Panc1 (cell line): ENCODE measurements at regions of chr10 and their contacts with region 1.

Region 1: GRCh38 chr10:125029606-125030242 is 87.8 kb downstream of the ZRANB1 start:
- DNase-seq: no peak
- ATAC-seq: peak; percentile 5; the same call in 1 of the 2 replicates
- H3K4me3 ChIP-seq: no peak overlapping the region
- H3K27ac ChIP-seq: no peak overlapping the region
- H3K4me1 ChIP-seq: peaks cover 8% of the 10 kb centered on the region
- H3K27me3 ChIP-seq: no peaks in the 10 kb centered on the region
- CTCF ChIP-seq: no peak

Region 2: DNA sequence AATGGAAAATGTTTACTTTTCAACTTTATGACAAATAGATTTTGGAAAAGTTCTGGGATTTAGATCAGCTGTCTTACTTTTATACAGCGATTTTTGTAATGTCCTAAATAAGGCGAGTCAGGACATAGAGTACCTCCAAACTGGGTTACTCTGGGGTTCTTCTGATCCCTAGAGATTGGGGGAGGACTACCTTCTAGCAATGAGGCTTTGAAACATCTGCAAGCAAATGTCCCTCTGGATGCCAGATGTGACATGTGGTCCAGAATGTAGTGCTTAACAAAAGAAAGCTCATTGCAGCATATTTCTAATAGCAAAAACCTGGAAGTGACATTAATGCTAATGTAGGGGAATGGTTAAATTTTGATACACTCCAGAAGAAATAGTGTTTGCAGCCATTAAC is 192.0 kb before region 1 on chr10:
- CTCF ChIA-PET with region 1: no interaction called
- POLR2A ChIA-PET with region 1: interaction called, 11 read pairs
- in situ Hi-C with region 1: no loop called
- intact Hi-C with region 1: no loop called
- DNase-seq: no peak
- ATAC-seq: no peak
- H3K4me3 ChIP-seq: no peak overlapping the region
- H3K27ac ChIP-seq: no peak overlapping the region
- H3K4me1 ChIP-seq: no peaks in the 10 kb centered on the region
- H3K27me3 ChIP-seq: no peaks in the 10 kb centered on the region
- CTCF ChIP-seq: no peak

Region 3: GRCh38 chr10:124955243-124955642 is 74.5 kb before region 1 on chr10:
- CTCF ChIA-PET with region 1: no interaction called
- POLR2A ChIA-PET with region 1: no interaction called
- in situ Hi-C with region 1: no loop called
- intact Hi-C with region 1: no loop called
- DNase-seq: no peak
- ATAC-seq: no peak
- H3K4me3 ChIP-seq: no peak overlapping the region
- H3K27ac ChIP-seq: no peak overlapping the region
- H3K4me1 ChIP-seq: 0 out of 2 replicates have a peak, but pooled peaks cover 3% of the 10 kb centered on the region
- H3K27me3 ChIP-seq: no peaks in the 10 kb centered on the region
- CTCF ChIP-seq: no peak

Region 4: DNA sequence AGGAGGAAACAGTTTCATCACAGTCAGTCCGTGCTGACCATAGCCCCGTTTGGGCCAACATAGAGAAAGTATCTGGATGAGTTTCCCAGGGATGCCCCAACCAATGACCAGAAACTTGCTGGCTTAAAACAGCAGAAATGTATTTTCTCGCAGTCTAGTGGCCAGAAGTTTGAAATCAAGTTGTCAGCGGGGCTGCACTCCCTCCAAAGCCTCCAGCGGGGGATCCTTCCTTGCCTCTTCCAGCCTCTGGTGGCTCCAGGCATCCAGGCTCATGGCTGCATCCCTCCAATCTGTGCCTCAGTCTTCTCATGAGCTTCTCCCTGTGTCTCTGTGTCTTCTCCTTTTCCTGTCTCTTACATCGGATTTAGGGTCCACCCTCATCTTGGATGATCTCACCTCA is 220.2 kb after region 1 on chr10:
- CTCF ChIA-PET with region 1: no interaction called
- POLR2A ChIA-PET with region 1: interaction called, 19 read pairs
- in situ Hi-C with region 1: no loop called
- intact Hi-C with region 1: no loop called
- DNase-seq: no peak
- ATAC-seq: no peak
- H3K4me3 ChIP-seq: no peak overlapping the region
- H3K27ac ChIP-seq: no peak overlapping the region
- H3K4me1 ChIP-seq: no peaks in the 10 kb centered on the region
- H3K27me3 ChIP-seq: peaks cover 12% of the 10 kb centered on the region
- CTCF ChIP-seq: no peak